Dendritic cell treated with granulocyte-macrophage colony-stimulating factor and Interleukin-4, amounts not matched to agents 40 ng/mL and 50 ng/mL, for 4 days (primary cell): ENCODE measurements at regions of chr16 and their contacts with region 1.

Region 1: GRCh38 chr16:52346709-52347108 is 200.2 kb downstream of the TOX3 start:
- H3K4me3 Mint-ChIP-seq: no peak overlapping the region
- H3K27ac Mint-ChIP-seq: no peak overlapping the region
- H3K4me1 Mint-ChIP-seq: no peaks in the 10 kb centered on the region
- H3K27me3 Mint-ChIP-seq: no peaks in the 10 kb centered on the region

Region 2: DNA sequence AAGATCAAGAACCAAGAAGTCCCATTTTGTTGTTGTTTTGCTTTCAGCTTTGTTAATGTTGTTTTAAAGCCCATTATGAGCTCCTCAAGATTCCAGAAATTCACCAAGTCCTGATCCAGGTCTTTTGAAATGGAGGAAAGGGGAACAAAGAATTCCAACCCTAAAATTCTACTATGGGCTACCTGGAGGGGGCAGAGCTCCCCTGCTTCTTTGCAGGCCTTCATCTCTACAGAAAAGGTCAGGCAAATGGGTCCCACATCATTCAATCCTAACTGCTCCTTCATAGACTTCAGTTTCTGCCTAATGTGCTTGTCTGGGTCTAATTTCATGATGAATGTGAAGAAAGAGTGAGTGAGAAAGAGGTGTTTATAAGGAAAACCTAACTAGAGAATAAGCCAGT is 175.2 kb before region 1 on chr16:
- intact Hi-C with region 1: no loop called
- H3K4me3 Mint-ChIP-seq: no peak overlapping the region
- H3K27ac Mint-ChIP-seq: no peak overlapping the region
- H3K4me1 Mint-ChIP-seq: no peaks in the 10 kb centered on the region
- H3K27me3 Mint-ChIP-seq: no peaks in the 10 kb centered on the region

Region 3: DNA sequence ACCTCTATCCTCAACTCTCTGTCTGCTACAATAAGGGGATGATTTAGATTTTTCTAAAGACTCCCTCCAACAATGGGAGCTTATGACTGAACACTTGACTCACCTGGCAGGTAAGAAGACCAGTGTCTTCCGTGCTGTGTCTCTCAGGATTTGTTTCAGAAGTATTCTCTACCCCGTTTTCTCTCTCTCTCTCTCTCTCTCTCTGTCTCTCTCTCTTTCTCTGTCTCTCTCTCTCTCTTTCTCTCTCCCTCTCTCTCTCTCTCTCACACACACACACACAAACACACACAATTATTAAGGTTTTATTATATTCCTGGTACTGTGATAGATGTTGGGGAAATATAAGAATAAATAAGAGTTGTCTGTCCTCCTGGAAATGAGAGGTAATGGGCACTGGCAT is 63.7 kb before region 1 on chr16:
- intact Hi-C with region 1: loop called (anchors 10 kb)
- H3K4me3 Mint-ChIP-seq: no peak overlapping the region
- H3K27ac Mint-ChIP-seq: no peak overlapping the region
- H3K4me1 Mint-ChIP-seq: no peaks in the 10 kb centered on the region
- H3K27me3 Mint-ChIP-seq: no peaks in the 10 kb centered on the region

Region 4: DNA sequence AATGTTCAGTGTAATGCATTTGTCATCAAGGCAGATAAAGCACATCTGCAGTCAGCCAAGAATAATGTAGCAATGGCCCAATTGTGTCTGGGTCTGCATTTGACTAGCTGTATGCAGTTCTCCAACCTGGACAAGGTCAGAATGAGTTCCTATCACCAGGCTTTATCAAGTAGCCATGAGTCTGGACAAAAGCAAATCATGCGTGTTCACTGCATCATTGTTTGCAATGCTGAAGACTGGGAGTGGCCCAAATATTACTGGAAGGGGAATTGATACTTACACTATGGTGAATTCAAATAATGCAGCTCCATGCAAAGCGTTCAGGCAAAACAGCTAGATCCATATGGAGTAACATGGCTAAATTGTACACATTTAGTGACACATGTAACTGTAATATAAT is 50.6 kb before region 1 on chr16:
- intact Hi-C with region 1: no loop called
- H3K4me3 Mint-ChIP-seq: no peak overlapping the region
- H3K27ac Mint-ChIP-seq: no peak overlapping the region
- H3K4me1 Mint-ChIP-seq: no peaks in the 10 kb centered on the region
- H3K27me3 Mint-ChIP-seq: no peaks in the 10 kb centered on the region